T-cell (primary cell): ENCODE measurements at regions of chr4 and their contacts with region 1.

Region 1: GRCh38 chr4:18039113-18039512 is 17.6 kb upstream of the LCORL start:
- DNase-seq: no peak
- ATAC-seq: no peak
- H3K4me3 ChIP-seq: no peak overlapping the region
- H3K4me3 Mint-ChIP-seq: no peak overlapping the region
- H3K27ac ChIP-seq: no peak overlapping the region
- H3K27ac Mint-ChIP-seq: no peak overlapping the region
- H3K4me1 ChIP-seq: no peaks in the 10 kb centered on the region
- H3K4me1 Mint-ChIP-seq: no peaks in the 10 kb centered on the region
- H3K27me3 ChIP-seq: peaks cover 0 to 3% of the 10 kb centered on the region in 2 experiments
- H3K27me3 Mint-ChIP-seq: peaks cover 17 to 29% of the 10 kb centered on the region in 2 donors

Region 2: DNA sequence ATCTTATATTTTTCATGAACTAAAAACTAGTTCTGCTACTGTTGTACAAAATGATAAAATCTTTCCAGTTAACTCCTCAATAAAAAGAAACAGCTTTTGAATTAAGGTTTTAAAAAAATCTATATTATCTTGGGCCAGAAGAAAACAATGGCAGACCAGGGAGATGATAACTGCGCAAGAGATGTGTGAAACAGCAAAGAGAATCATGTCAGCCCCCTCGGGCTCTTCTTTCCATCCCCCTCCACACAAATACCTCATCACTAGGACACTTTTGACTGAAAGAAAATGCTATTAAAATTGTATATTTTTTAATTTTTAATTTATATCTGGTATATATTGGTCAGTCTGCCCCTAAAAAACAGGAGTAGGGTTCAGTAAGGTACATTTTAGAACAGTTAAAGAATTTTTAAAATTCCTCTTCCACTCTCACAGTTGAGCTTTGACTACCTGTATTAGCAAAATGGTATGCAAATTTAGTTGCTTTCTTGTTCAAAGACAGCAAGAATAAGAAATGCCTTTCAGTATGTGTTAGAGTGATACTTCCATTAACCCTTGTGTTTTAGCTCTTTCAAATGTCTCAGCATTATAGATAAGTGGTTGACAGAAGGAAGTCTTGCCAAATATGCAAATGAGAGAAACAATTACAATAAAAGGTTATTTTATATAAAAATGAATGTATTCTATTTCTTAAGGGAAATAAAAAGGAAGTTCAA is 18.9 kb after region 1 on chr4:
- CTCF ChIA-PET with region 1: interaction called in 1 of 2 experiments, 11 read pairs
- POLR2A ChIA-PET with region 1: no interaction called
- DNase-seq: no peak
- ATAC-seq: peak in 1 of 4 experiments; percentile 26
- H3K4me3 ChIP-seq: no peak overlapping the region
- H3K4me3 Mint-ChIP-seq: peak overlapping the region in 1 of 3 donors; percentile 48
- H3K27ac ChIP-seq: no peak overlapping the region
- H3K27ac Mint-ChIP-seq: no peak overlapping the region
- H3K4me1 ChIP-seq: peaks cover 5 to 18% of the 10 kb centered on the region in 2 experiments
- H3K4me1 Mint-ChIP-seq: peaks cover 9 to 22% (median 20%) of the 10 kb centered on the region in 3 donors
- H3K27me3 ChIP-seq: peaks cover 0 to 5% of the 10 kb centered on the region in 2 experiments
- H3K27me3 Mint-ChIP-seq: peaks cover 34 to 35% of the 10 kb centered on the region in 2 donors